Activated T-helper 1 cell treated with anti-CD3 and anti-CD28 coated beads, Interleukin-12 subunit alpha, Interleukin-12 subunit beta, Interleukin-2, Interleukin-4 antibody, amounts not matched to agents 30 ng/mL and 10 ng/mL and 1 ng/mL, durations not matched to agents 14 hours and 24 hours and 36 hours (primary cell): ENCODE measurements at regions of chr5 and their contacts with region 1.

Region 1: GRCh38 chr5:173709761-173710160 is 93.3 kb upstream of the BOD1 start:
- DNase-seq: no peak
- H3K4me3 Mint-ChIP-seq: no peak overlapping the region
- H3K27ac Mint-ChIP-seq: no peak overlapping the region
- H3K4me1 Mint-ChIP-seq: no peaks in the 10 kb centered on the region
- H3K27me3 Mint-ChIP-seq: no peaks in the 10 kb centered on the region

Region 2: DNA sequence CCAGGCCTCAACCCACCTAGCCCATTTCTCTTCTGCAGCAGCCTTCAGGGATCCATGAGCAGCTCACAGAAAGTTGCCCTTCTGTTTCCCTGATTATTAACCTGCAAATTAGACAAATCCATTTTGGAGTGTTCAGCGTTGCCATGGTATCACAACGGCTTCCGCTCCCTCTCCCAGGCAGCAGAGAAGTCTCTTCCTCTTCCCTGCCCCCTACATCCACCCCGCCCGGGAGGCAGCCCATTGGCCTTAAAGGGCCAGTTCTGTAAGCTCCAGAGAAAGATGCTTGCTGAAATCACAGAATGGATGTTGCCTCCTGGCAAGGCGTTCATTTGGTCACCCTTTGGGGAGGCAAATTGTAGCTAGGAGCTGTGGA is 45.6 kb before region 1 on chr5:
- intact Hi-C with region 1: no loop called
- DNase-seq: no peak
- H3K4me3 Mint-ChIP-seq: no peak overlapping the region
- H3K27ac Mint-ChIP-seq: no peak overlapping the region
- H3K4me1 Mint-ChIP-seq: no peaks in the 10 kb centered on the region
- H3K27me3 Mint-ChIP-seq: peaks cover 3% of the 10 kb centered on the region

Region 3: DNA sequence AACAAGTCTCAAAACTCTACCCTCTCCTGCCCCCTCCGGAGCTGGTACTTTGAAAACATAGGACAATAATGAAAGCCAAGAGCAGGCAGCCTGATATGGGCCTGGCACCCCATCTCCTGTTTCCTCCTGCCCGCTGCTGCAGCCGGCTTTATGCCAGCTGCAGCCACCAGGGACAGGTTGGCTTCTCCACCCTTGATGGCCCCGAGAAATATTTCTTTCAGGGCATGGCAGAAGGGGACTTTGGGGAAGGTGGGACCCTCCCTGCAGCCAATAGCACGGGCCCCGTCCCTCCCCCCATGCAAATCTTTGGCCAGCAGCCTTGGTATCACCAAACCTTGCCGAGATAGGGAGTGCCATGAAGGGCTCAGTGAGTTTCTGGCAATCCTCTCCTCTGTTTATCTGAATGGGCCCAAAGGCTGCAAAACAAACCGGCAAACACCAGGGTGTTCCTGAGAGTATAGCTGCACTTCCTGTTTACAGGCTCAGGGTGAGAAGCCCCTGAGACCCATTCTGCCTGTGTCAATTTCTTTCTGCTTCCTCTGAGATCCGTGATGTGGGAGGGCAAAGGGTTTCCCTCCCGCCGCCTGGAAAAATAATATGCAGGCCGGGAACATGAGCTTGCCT is 19.9 kb before region 1 on chr5:
- intact Hi-C with region 1: no loop called
- DNase-seq: no peak
- H3K4me3 Mint-ChIP-seq: no peak overlapping the region
- H3K27ac Mint-ChIP-seq: no peak overlapping the region
- H3K4me1 Mint-ChIP-seq: no peaks in the 10 kb centered on the region
- H3K27me3 Mint-ChIP-seq: no peaks in the 10 kb centered on the region

Region 4: DNA sequence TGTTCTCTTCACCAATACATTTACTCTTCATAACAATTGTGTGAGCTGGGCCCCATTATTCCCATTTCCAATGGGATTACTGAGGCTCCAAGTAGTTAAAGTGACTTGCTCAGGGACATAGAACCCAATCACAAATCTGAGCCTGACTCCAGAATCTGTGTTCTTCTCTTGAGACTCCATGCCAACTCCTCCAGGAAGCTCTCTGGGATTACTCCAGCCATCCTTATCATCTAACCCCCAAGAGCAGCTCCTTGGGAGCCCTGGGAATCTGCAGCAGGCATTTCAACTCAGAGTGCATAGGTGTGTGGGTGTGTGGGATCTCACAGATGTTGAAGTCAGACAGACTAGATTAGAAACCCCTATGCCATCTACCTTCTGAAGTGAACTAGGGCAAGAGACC is 38.1 kb after region 1 on chr5:
- intact Hi-C with region 1: loop called (anchors 1 kb)
- DNase-seq: no peak
- H3K4me3 Mint-ChIP-seq: no peak overlapping the region
- H3K27ac Mint-ChIP-seq: no peak overlapping the region
- H3K4me1 Mint-ChIP-seq: no peaks in the 10 kb centered on the region
- H3K27me3 Mint-ChIP-seq: peaks cover 2% of the 10 kb centered on the region